Activated T-helper 1 cell treated with anti-CD3 and anti-CD28 coated beads, Interleukin-12 subunit alpha, Interleukin-12 subunit beta, Interleukin-2, Interleukin-4 antibody, amounts not matched to agents 30 ng/mL and 10 ng/mL and 1 ng/mL, durations not matched to agents 14 hours and 24 hours and 36 hours (primary cell): ENCODE measurements at regions of chr11 and their contacts with region 1.

Region 1: GRCh38 chr11:18115360-18116127 is 9.7 kb upstream of the SAAL1 start:
- DNase-seq: peak; percentile 43
- H3K4me3 Mint-ChIP-seq: no peak overlapping the region
- H3K27ac Mint-ChIP-seq: no peak overlapping the region
- H3K4me1 Mint-ChIP-seq: peaks cover 8% of the 10 kb centered on the region
- H3K27me3 Mint-ChIP-seq: peaks cover 30% of the 10 kb centered on the region

Region 2: GRCh38 chr11:18105086-18105801 is 10.3 kb before region 1 on chr11:
- intact Hi-C with region 1: no loop called
- DNase-seq: no peak
- H3K4me3 Mint-ChIP-seq: peak overlapping the region; percentile 94
- H3K27ac Mint-ChIP-seq: peak overlapping the region; percentile 88
- H3K4me1 Mint-ChIP-seq: peaks cover 33% of the 10 kb centered on the region
- H3K27me3 Mint-ChIP-seq: peaks cover 3% of the 10 kb centered on the region

Region 3: DNA sequence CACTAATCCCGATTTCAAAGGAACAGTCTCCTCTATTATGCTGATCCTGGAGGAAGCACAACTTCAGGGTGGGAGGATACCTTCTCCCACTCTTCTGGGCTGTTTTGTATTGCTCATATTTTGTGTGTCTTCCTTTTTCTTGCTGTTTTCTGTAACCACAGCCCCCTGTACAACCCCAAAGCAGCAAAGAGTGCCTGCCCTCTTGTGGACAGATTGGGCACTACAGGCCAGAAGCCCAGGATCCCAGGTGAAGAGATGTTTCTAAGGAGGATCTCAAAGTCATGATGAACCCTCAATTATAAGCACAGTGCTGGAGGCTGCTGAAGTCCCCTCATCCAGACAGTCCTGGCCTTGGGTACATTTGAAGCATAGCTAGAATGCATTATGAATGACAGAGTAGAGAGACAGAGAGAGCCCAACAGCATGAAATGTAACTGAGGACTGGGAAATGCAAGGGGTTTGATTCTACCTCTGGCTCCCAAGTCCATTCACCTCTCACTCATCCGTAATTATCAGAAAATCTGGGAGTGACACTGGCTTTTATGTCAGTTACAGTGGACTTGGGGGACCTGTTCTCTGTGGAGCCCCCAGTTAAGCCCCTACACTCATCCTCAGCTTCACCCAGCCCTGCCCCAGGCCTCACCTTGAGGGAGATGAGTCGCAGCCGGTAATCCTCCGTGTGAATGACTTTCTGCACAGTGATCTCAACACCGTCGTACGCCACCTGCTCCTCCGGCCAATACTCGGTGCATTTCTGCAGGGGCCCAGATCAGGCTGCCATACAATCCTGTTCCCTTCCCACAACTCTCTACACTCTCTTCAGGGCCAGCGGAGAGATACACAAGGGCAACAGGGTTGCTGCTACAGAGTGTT is 616.6 kb after region 1 on chr11:
- intact Hi-C with region 1: loop called (anchors 1 kb)
- DNase-seq: peak; percentile 47
- H3K4me3 Mint-ChIP-seq: no peak overlapping the region
- H3K27ac Mint-ChIP-seq: no peak overlapping the region
- H3K4me1 Mint-ChIP-seq: no peaks in the 10 kb centered on the region
- H3K27me3 Mint-ChIP-seq: no peaks in the 10 kb centered on the region

Region 4: GRCh38 chr11:18768472-18768901 is 652.9 kb after region 1 on chr11:
- intact Hi-C with region 1: loop called (anchors 1 kb)
- DNase-seq: no peak
- H3K4me3 Mint-ChIP-seq: no peak overlapping the region
- H3K27ac Mint-ChIP-seq: no peak overlapping the region
- H3K4me1 Mint-ChIP-seq: peaks cover 34% of the 10 kb centered on the region
- H3K27me3 Mint-ChIP-seq: peaks cover 6% of the 10 kb centered on the region

Region 5: DNA sequence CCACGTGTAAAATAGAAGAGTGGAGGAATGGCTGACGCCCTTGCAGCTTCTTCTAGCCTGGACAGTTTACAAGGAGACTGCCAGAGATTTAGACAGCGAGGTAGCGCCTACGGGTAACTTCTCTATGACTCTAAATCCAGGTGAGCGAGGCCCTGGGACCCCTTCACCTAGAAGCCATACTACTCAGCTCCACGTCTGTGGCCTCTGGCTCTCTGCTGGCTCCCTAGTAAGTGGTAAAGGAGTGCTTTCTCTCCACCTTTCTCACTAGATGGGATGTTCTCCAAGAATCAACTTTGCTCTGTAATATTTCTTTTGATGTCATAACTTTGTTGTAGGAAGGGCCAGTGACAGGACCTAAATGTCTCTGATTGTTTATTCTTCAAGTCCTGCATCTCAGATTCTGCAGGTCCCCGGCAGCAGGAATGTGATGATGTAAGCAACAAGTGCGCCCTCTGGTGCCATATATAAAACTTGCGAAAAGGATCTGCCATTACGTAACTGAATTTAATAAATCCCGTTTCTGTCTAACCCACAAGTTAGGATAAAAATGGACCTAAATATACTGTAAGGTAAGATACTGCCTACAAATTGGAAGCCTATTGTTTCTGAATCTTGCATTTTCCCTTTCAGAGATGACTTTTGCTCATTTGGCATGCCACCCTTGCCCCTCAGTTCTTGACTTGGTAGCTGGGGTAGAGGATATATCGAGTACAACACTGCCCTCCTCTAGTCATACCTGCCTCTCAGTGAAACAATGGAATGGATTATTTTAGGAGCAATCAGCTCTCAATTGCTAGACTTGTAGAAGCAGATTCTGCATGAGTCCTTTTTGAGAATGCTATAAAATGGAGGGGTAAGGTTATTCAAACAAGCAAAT is 687.1 kb after region 1 on chr11:
- intact Hi-C with region 1: loop called (anchors 1 kb)
- DNase-seq: peak; percentile 19
- H3K4me3 Mint-ChIP-seq: no peak overlapping the region
- H3K27ac Mint-ChIP-seq: no peak overlapping the region
- H3K4me1 Mint-ChIP-seq: no peaks in the 10 kb centered on the region
- H3K27me3 Mint-ChIP-seq: peaks cover 20% of the 10 kb centered on the region